ENCODE measurements at regions of chr1 and their contacts with region 1.

Region 1: DNA sequence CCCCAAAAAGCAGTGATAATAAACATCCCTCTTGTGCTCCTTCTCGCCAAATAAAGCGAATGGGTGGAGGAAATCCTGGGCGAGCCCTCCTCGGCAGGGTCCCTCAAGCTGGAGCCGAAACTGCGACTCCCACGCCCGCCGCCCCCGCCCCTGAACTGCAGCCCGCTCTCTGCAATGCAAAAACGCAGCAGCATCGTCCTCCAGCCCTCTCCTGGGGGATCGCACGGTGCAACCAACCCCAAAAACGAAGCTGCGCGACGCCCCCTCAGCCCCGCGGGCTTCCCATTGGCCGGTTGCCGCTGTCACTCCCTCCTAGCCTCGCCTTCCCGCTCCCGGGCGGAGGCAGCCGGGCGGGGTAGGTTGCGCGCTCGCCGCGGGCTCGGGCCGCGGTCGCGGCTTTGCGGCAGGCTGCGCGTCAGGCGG is at the start of gene TMCC2:
- DNase-seq: peak; percentile 95 to 100 (median 99)
- ATAC-seq: peak; percentile 96
- H3K4me3 ChIP-seq: peak within 1 kb of the TSS; percentile 47
- H3K27ac ChIP-seq: no peak within 1 kb of the TSS
- H3K4me1 ChIP-seq: peaks cover 27 to 29% of the 10 kb centered on the region in 2 experiments
- H3K27me3 ChIP-seq: peaks cover 3 to 13% of the 10 kb centered on the region in 2 experiments; a peak in 4 of 5 replicates
- CTCF ChIP-seq: no peak
- EP300 ChIP-seq: no peak
- POLR2A ChIP-seq: no peak
- RAD21 ChIP-seq: no peak; a peak in 1 of 4 replicates
- polyA plus RNA-seq, gene TMCC2: 0.06 to 0.10 TPM

Region 2: DNA sequence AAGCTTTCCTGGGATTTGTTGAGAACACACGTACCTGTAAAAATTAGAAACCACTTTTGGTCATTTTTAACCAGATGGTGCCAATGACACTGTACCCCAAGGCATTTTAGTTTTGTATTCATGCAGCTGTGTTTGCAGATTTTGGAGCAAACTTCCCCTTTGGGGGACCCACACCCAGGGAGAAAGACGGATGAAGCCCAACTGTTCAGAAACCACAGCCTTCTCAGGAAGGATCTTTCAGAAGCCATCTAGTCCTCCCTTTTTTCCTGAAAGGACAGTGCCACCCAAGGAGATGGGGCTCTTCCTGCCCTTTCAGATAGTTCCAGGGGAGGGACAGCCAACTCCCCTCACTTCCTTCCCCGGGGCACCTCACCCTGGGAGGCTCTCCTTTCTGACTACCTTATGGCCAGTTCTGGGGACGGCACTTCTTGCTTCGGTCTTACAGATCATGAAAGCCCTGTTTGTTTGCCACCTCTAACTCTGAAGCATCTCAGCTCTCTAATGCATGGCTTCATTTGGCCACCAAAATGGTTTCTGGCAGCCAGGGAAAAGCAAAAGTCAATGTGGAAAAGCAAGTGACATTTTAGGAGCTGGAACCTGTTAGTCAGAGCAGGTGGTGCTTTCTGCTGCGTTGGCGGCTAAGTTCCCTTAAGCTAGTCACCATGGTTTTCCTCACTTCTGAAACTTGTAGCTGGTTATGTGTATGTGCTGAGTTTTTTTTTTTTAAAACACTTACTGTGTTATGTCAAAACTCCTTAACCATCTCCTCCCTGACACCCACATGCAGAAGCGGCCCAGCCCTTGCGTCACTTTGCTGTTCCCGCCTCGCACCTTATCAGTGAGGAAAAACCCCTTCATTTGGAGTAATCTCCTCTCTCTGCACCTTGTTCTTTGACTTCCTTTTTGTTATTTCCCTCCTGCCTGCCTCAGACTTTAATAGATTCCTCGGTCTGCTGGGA is 10.2 kb after region 1 on chr1:
- CTCF ChIA-PET with region 1: no interaction called
- POLR2A ChIA-PET with region 1: interaction called, 19 read pairs
- in situ Hi-C with region 1: no loop called
- intact Hi-C with region 1: no loop called
- DNase-seq: peak; percentile 60 to 81 (median 68)
- ATAC-seq: peak; percentile 80
- H3K4me3 ChIP-seq: no peak overlapping the region
- H3K27ac ChIP-seq: no peak overlapping the region
- H3K4me1 ChIP-seq: peaks cover 17 to 23% of the 10 kb centered on the region in 2 experiments
- H3K27me3 ChIP-seq: peaks cover 0 to 10% of the 10 kb centered on the region in 2 experiments; a peak in 1 of 5 replicates
- CTCF ChIP-seq: no peak
- EP300 ChIP-seq: peak; percentile 57; the same call in 1 of the 2 replicates
- POLR2A ChIP-seq: no peak
- RAD21 ChIP-seq: no peak

Region 3: GRCh38 chr1:205243350-205244191 is 16.0 kb after region 1 on chr1:
- CTCF ChIA-PET with region 1: no interaction called
- POLR2A ChIA-PET with region 1: interaction called, 19 read pairs
- in situ Hi-C with region 1: no loop called
- intact Hi-C with region 1: no loop called
- DNase-seq: no peak
- ATAC-seq: no peak
- H3K4me3 ChIP-seq: no peak overlapping the region
- H3K27ac ChIP-seq: no peak overlapping the region
- H3K4me1 ChIP-seq: peaks cover 15 to 16% of the 10 kb centered on the region in 2 experiments
- H3K27me3 ChIP-seq: peaks cover 0 to 22% of the 10 kb centered on the region in 2 experiments; a peak in 2 of 5 replicates
- CTCF ChIP-seq: no peak
- EP300 ChIP-seq: no peak
- POLR2A ChIP-seq: no peak
- RAD21 ChIP-seq: no peak

Measured in K562 (cell line).